Posterior cingulate gyrus (tissue), 11 donors: ENCODE measurements at regions of chr12 and their contacts with region 1.

Region 1: DNA sequence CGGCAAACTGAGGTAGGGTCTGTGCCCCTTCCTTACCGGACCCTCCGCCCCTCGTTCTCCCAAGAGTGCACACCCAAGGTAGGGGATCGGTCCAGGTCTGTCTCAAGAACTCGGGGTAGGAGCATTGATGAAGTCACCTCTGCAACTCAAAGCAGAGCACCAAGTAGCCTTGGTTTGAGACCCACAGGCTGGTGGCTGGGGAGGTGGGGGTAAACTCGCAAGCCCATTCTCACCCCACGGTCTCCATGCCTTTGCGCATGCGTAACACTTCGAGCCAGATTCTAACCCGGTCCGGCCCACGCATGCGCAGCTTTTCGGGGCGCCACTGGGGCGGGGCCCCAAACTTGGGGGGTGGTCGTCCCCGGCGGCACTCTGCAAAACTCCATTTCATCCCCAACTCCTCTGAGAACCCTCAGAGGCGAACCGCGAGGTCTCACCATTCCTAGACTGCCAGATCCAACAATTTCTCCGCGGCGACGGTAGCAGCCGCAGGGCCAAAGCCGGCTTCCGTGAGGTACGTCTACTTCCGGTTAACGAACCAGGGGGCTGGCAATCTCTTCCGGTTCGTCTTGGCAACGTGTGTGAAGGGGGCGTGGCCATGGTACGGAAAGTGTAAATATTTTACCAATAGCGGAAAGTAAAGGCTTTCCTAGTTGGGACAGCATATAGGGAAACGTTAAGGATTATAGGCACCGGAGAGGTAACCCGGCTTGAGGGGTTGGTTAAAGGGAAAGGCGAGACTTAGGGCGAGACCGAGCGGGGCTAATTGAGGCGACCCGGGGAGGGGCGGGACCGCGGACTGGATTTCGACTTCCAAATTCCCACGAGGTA is at the start of gene MCRS1:
- DNase-seq: peak; percentile 78 to 97 (median 85)

Region 2: GRCh38 chr12:49623142-49623904 is 55.5 kb after region 1 on chr12 and contains the start of gene PRPF40B:
- intact Hi-C with region 1: loop called (anchors 5 kb)
- DNase-seq: peak; percentile 78 to 98 (median 86)